ENCODE measurements at regions of chr4 and their contacts with region 1.

Region 1: GRCh38 chr4:36399762-36400353 is 118.4 kb downstream of the DTHD1 start:
- DNase-seq: peak; percentile 29
- H3K4me3 ChIP-seq: no peak overlapping the region
- H3K27ac ChIP-seq: no peak overlapping the region
- H3K4me1 ChIP-seq: no peaks in the 10 kb centered on the region
- H3K27me3 ChIP-seq: no peaks in the 10 kb centered on the region
- CTCF ChIP-seq: peak; percentile 57

Region 2: DNA sequence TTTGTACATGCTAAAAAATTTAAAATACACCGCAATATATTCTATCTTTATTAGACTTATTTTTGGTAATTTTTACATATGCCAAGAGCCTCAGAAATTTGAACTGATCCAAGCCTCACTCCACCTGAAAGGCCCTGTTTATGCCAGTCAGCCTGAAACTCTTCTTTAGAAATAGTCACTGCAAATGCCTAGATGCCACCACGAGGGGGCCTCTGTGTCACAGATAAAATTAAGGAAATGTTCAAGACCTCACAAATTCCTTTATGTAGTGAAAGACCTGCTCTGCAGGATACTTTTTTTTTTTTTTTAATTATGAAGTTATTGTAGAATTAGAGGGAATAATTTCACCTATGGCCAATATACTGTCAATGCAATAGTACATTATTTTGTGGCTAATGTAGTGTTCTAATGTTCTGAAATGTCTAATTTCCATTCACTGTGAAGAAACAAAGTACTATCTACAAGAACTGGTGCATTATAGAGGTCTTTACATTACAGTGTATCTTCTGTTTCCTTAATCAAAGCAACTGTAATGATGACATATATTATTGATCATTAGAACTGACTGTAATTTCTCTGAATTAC is 48.7 kb before region 1 on chr4:
- intact Hi-C with region 1: loop called (anchors 5 kb)
- DNase-seq: peak; percentile 65
- H3K4me3 ChIP-seq: no peak overlapping the region
- H3K27ac ChIP-seq: no peak overlapping the region
- H3K4me1 ChIP-seq: no peaks in the 10 kb centered on the region
- H3K27me3 ChIP-seq: no peaks in the 10 kb centered on the region
- CTCF ChIP-seq: peak; percentile 75

Region 3: GRCh38 chr4:36601864-36602495 is 202.1 kb after region 1 on chr4:
- intact Hi-C with region 1: no loop called
- DNase-seq: no peak
- H3K4me3 ChIP-seq: no peak overlapping the region
- H3K27ac ChIP-seq: no peak overlapping the region
- H3K4me1 ChIP-seq: no peaks in the 10 kb centered on the region
- H3K27me3 ChIP-seq: no peaks in the 10 kb centered on the region
- CTCF ChIP-seq: no peak

Measured in colonic mucosa (tissue), 4 donors.